Prostate gland (tissue), 2 donors: ENCODE measurements at regions of chr10 and their contacts with region 1.

Region 1: GRCh38 chr10:44386546-44387052 is 1.7 kb upstream of the CXCL12 start:
- DNase-seq: no peak
- H3K4me3 ChIP-seq: no peak overlapping the region
- H3K27ac ChIP-seq: no peak overlapping the region
- H3K4me1 ChIP-seq: peaks cover 4% of the 10 kb centered on the region
- H3K27me3 ChIP-seq: no peaks in the 10 kb centered on the region
- CTCF ChIP-seq: peak; percentile 75 to 87 (median 85)
- POLR2A ChIP-seq: no peak

Region 2: GRCh38 chr10:43671656-43672531 is 714.7 kb before region 1 on chr10:
- intact Hi-C with region 1: loop called (anchors 5 kb)
- DNase-seq: peak; percentile 63
- H3K4me3 ChIP-seq: no peak overlapping the region
- H3K27ac ChIP-seq: no peak overlapping the region
- H3K4me1 ChIP-seq: no peaks in the 10 kb centered on the region
- H3K27me3 ChIP-seq: peaks cover 2% of the 10 kb centered on the region
- CTCF ChIP-seq: peak; percentile 54 to 90 (median 81)
- POLR2A ChIP-seq: no peak

Region 3: GRCh38 chr10:44310762-44311562 is 75.6 kb before region 1 on chr10:
- intact Hi-C with region 1: loop called (anchors 5 kb)
- DNase-seq: peak; percentile 62
- H3K4me3 ChIP-seq: peak overlapping the region in 1 of 2 donors; percentile 15
- H3K27ac ChIP-seq: no peak overlapping the region
- H3K4me1 ChIP-seq: peaks cover 2% of the 10 kb centered on the region
- H3K27me3 ChIP-seq: no peaks in the 10 kb centered on the region
- CTCF ChIP-seq: peak; percentile 66 to 93 (median 88)
- POLR2A ChIP-seq: no peak

Region 4: GRCh38 chr10:44864637-44865288 is 478.2 kb after region 1 on chr10:
- intact Hi-C with region 1: loop called (anchors 2 kb)
- DNase-seq: peak; percentile 84
- H3K4me3 ChIP-seq: peak overlapping the region; percentile 33 to 34
- H3K27ac ChIP-seq: peak overlapping the region; percentile 62 to 70
- H3K4me1 ChIP-seq: no peaks in the 10 kb centered on the region
- H3K27me3 ChIP-seq: no peaks in the 10 kb centered on the region
- CTCF ChIP-seq: peak; percentile 94 to 98 (median 97)
- POLR2A ChIP-seq: no peak

Region 5: GRCh38 chr10:44959247-44960087 is 572.9 kb after region 1 on chr10 and contains the start of gene RASSF4:
- intact Hi-C with region 1: loop called (anchors 10 kb)
- DNase-seq: peak; percentile 89
- H3K4me3 ChIP-seq: peak within 1 kb of the TSS; percentile 51 to 72
- H3K27ac ChIP-seq: peak within 1 kb of the TSS; percentile 74 to 76
- H3K4me1 ChIP-seq: peaks cover 12% of the 10 kb centered on the region
- H3K27me3 ChIP-seq: no peaks in the 10 kb centered on the region
- CTCF ChIP-seq: peak in 1 of 4 experiments; percentile 26
- POLR2A ChIP-seq: peak; percentile 69
- total RNA-seq, gene RASSF4: 6.1 to 31.0 TPM